ENCODE measurements at regions of chr1 and their contacts with region 1.

Region 1: GRCh38 chr1:58816072-58816746 is 32.4 kb upstream of the JUN start:
- DNase-seq: peak; percentile 93
- H3K4me3 Mint-ChIP-seq: peak overlapping the region; percentile 85
- H3K27ac Mint-ChIP-seq: peak overlapping the region; percentile 98
- H3K4me1 Mint-ChIP-seq: peaks cover 52% of the 10 kb centered on the region
- H3K27me3 Mint-ChIP-seq: no peaks in the 10 kb centered on the region
- CTCF ChIP-seq: no peak

Region 2: DNA sequence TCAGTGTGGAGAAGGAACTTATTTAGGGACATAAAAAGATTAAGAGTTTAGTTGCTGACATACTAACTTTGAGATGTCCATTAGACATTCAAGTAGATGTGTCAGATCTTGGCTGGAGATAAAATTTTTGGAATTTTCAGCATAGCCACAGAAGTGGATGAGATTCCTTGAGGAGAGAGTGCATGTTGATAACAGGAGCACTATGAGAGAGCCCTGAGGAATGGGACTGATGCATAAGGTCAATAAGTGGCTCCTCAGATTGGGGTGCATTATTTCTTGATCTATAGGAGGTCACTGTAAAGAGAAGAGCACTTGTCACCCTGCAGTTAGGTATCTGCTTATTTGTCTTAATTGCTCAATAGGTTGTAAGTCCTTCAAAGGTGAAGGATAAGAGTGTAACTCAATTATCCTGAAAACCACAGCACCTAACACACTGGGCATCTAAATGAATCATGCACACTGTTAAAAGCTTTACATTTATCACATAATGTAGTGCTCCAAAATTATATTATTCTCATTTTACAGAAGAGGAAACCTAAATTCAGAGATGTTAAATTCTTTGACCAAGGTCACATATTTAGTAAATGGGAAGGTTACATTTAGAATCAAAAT is 187.1 kb before region 1 on chr1:
- CTCF ChIA-PET with region 1: no interaction called
- intact Hi-C with region 1: no loop called
- DNase-seq: no peak
- H3K4me3 Mint-ChIP-seq: no peak overlapping the region
- H3K27ac Mint-ChIP-seq: no peak overlapping the region
- H3K4me1 Mint-ChIP-seq: no peaks in the 10 kb centered on the region
- H3K27me3 Mint-ChIP-seq: no peaks in the 10 kb centered on the region
- CTCF ChIP-seq: no peak

Region 3: GRCh38 chr1:58883037-58883887 is 67.1 kb after region 1 on chr1:
- CTCF ChIA-PET with region 1: interaction called, 5 read pairs
- intact Hi-C with region 1: loop called (anchors 1 kb)
- DNase-seq: peak; percentile 74
- H3K4me3 Mint-ChIP-seq: peak overlapping the region; percentile 37
- H3K27ac Mint-ChIP-seq: peak overlapping the region; percentile 94
- H3K4me1 Mint-ChIP-seq: peaks cover 72% of the 10 kb centered on the region
- H3K27me3 Mint-ChIP-seq: no peaks in the 10 kb centered on the region
- CTCF ChIP-seq: no peak

Region 4: DNA sequence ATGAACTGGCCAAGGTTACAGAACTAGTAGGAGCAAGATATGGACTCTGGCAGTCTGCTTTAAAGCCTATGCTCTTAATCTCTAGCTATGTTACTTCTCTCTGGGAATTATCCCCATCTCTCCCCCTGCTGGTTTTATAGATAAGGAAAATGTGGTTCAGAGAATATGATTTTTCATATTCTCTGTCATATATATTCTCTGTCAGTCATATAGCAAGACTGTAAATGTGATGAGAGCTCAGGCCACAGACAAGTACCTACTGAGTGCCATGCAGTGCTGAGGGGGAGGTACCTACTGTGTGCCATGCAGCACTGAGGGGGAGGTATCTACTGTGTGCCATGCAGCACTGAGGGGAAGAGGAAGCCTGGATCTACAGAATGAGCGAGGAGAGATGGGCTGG is 260.4 kb after region 1 on chr1:
- CTCF ChIA-PET with region 1: no interaction called
- intact Hi-C with region 1: loop called (anchors 10 kb)
- DNase-seq: no peak
- H3K4me3 Mint-ChIP-seq: no peak overlapping the region
- H3K27ac Mint-ChIP-seq: no peak overlapping the region
- H3K4me1 Mint-ChIP-seq: peaks cover 32% of the 10 kb centered on the region
- H3K27me3 Mint-ChIP-seq: no peaks in the 10 kb centered on the region
- CTCF ChIP-seq: no peak

Region 5: GRCh38 chr1:59113876-59114457 is 297.8 kb after region 1 on chr1:
- CTCF ChIA-PET with region 1: no interaction called
- intact Hi-C with region 1: loop called (anchors 1 kb)
- DNase-seq: no peak
- H3K4me3 Mint-ChIP-seq: no peak overlapping the region
- H3K27ac Mint-ChIP-seq: peak overlapping the region; percentile 58
- H3K4me1 Mint-ChIP-seq: peaks cover 34% of the 10 kb centered on the region
- H3K27me3 Mint-ChIP-seq: no peaks in the 10 kb centered on the region
- CTCF ChIP-seq: no peak